ENCODE measurements at regions of chr22 and their contacts with region 1.

Region 1: DNA sequence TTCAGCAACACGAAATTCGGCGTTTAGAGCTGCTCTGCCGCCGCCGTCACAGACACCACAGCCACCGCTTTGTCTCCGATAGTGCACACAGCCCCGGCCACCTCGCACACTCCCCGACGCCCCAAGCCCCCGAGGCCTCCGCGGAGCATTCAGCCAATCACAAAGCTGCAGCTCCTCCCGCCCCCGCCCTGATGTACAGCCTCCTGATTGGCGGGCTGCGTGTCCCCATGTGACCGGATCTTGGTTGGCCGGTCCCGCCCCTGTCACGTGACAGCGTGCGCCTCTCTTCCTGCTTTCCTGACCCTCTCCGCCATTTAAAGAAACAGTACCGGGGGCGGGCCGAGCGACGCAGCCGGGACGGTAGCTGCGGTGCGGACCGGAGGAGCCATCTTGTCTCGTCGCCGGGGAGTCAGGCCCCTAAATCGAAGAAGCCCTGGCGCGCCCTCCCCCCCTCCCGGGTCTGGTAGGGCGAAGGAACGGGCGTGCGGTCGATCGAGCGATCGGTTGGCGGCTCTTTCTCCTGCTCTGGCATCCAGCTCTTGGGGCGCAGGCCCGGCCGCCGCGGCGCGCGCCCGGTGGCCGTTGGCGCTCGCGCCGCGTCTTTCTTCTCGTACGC is at the start of gene TUG1:
- DNase-seq: peak; percentile 98
- ATAC-seq: peak; percentile 93
- H3K4me3 Mint-ChIP-seq: peak within 1 kb of the TSS; percentile 89
- H3K27ac Mint-ChIP-seq: peak within 1 kb of the TSS; percentile 99
- H3K4me1 Mint-ChIP-seq: peaks cover 60% of the 10 kb centered on the region
- H3K27me3 Mint-ChIP-seq: no peaks in the 10 kb centered on the region
- total RNA-seq, gene TUG1: 67.3 to 72.3 TPM

Region 2: GRCh38 chr22:30940685-30941362 is 28.2 kb before region 1 on chr22:
- CTCF ChIA-PET with region 1: interaction called, 13 read pairs
- POLR2A ChIA-PET with region 1: interaction called, 26 read pairs
- DNase-seq: peak; percentile 49
- ATAC-seq: peak; percentile 43
- H3K4me3 Mint-ChIP-seq: peak overlapping the region; percentile 56
- H3K27ac Mint-ChIP-seq: peak overlapping the region; percentile 88
- H3K4me1 Mint-ChIP-seq: peaks cover 61% of the 10 kb centered on the region
- H3K27me3 Mint-ChIP-seq: no peaks in the 10 kb centered on the region

Region 3: GRCh38 chr22:30947816-30948454 is 21.1 kb before region 1 on chr22:
- CTCF ChIA-PET with region 1: interaction called, 13 read pairs
- POLR2A ChIA-PET with region 1: interaction called, 23 read pairs
- DNase-seq: no peak
- ATAC-seq: no peak
- H3K4me3 Mint-ChIP-seq: no peak overlapping the region
- H3K27ac Mint-ChIP-seq: no peak overlapping the region
- H3K4me1 Mint-ChIP-seq: peaks cover 55% of the 10 kb centered on the region
- H3K27me3 Mint-ChIP-seq: no peaks in the 10 kb centered on the region

Region 4: DNA sequence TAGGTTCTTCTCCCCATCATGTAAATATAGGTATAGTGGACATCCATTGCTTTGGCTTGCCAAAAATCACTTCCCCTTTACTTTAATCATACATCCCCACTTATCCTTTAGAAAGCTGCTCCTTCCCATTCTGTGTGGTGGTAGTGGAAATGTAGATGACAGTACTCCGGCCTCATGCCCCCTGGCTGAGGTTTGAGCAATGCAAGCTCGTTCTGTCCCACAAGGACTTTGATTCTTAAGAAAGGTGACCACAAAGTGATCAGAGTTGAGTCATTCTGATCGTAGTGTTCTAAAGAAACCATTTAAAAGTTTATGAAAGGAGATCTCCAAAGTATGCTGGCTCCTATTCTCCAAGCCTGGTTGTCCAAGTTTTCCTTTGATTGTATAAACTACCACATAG is 10.9 kb after region 1 on chr22:
- CTCF ChIA-PET with region 1: interaction called, 19 read pairs
- POLR2A ChIA-PET with region 1: interaction called, 18 read pairs
- DNase-seq: no peak
- ATAC-seq: no peak
- H3K4me3 Mint-ChIP-seq: no peak overlapping the region
- H3K27ac Mint-ChIP-seq: no peak overlapping the region
- H3K4me1 Mint-ChIP-seq: peaks cover 17% of the 10 kb centered on the region
- H3K27me3 Mint-ChIP-seq: no peaks in the 10 kb centered on the region

Region 5: DNA sequence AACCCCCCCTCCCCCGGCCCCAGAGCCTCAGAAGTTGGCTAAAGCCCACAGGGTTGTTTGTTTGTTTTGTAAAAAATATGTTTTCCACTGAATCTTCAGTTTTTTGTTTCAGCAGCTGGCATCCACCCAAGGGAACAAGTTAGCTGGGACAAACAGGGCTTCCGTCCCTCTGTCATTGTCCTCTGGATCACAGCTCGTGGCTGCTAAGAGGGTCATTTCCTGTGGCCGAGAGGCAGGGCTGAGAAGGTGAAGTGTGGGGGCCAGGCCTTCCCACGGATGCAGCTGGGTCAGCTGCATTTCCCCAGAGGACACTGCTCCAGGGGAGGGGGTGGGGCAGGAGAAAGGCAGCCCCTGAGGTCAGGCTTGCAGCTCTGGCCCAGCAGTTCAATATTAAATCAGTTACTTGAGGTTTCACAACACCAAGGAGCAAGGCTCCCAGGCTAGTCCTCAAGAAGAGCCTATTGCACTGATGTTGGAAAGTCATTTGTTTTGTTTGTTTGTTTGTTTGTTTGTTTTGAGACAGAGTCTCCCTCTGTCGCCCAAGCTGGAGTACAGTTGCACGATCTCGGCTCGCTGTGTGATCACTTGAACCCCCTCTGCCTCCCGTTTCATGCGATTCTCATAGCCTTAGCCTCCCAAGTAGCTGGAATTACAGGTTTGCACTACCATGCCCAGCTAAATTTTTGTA is 77.7 kb after region 1 on chr22:
- CTCF ChIA-PET with region 1: no interaction called
- POLR2A ChIA-PET with region 1: no interaction called
- DNase-seq: no peak
- ATAC-seq: no peak
- H3K4me3 Mint-ChIP-seq: no peak overlapping the region
- H3K27ac Mint-ChIP-seq: no peak overlapping the region
- H3K4me1 Mint-ChIP-seq: no peaks in the 10 kb centered on the region
- H3K27me3 Mint-ChIP-seq: no peaks in the 10 kb centered on the region

Region 6: DNA sequence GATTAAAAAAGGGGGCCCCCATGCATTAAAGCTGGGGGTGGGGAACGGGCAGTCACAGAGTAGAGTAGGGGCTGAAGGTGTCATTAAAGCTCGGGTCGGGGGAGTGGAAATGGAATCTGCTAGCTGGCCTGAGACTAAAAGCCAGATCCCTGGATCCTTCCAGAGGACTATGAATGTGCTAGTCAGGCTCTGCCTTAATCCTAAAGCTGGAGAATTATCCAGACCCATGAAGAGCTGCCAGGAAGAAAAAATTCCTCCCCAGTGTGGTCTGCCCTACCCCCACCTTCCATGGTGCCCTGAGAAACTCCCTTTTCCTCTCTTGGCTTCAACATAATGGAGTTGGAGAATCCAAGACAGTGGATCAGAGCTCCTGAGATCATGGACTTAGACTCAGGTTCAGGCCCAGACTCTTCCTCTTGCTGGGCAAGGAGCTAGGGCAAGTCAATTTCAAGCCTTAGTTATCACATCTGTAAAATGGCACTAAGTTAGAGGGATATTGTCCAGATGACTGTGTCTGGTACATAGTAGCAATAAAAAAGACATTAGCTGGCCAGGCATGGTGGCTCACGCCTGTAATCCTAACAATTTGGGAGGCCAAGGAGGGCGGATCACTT is 88.1 kb after region 1 on chr22:
- CTCF ChIA-PET with region 1: no interaction called
- POLR2A ChIA-PET with region 1: no interaction called
- DNase-seq: no peak
- ATAC-seq: no peak
- H3K4me3 Mint-ChIP-seq: no peak overlapping the region
- H3K27ac Mint-ChIP-seq: no peak overlapping the region
- H3K4me1 Mint-ChIP-seq: no peaks in the 10 kb centered on the region
- H3K27me3 Mint-ChIP-seq: no peaks in the 10 kb centered on the region